K562 (cell line): ENCODE measurements at regions of chr1 and their contacts with region 1.

Region 1: GRCh38 chr1:246753670-246754535 is 29.7 kb downstream of the SCCPDH start:
- DNase-seq: peak; percentile 67 to 81 (median 70)
- ATAC-seq: peak; percentile 99
- H3K4me3 ChIP-seq: no peak overlapping the region
- H3K27ac ChIP-seq: no peak overlapping the region
- H3K4me1 ChIP-seq: 0 out of 5 replicates have a peak, but pooled peaks cover 0 to under 1% of the 10 kb centered on the region in 2 experiments
- H3K27me3 ChIP-seq: no peaks in the 10 kb centered on the region
- CTCF ChIP-seq: peak; percentile 82 to 94 (median 90)
- EP300 ChIP-seq: no peak
- POLR2A ChIP-seq: no peak
- RAD21 ChIP-seq: peak; percentile 75 to 87

Region 2: GRCh38 chr1:246497331-246497915 is 256.5 kb before region 1 on chr1:
- CTCF ChIA-PET with region 1: interaction called, 13 read pairs
- POLR2A ChIA-PET with region 1: no interaction called
- in situ Hi-C with region 1: no loop called
- intact Hi-C with region 1: loop called (anchors 1 kb)
- DNase-seq: peak; percentile 62 to 84 (median 67)
- ATAC-seq: peak; percentile 45
- H3K4me3 ChIP-seq: no peak overlapping the region
- H3K27ac ChIP-seq: no peak overlapping the region
- H3K4me1 ChIP-seq: peaks cover 0 to 2% of the 10 kb centered on the region in 2 experiments; a peak in 2 of 5 replicates
- H3K27me3 ChIP-seq: no peaks in the 10 kb centered on the region
- CTCF ChIP-seq: peak; percentile 70 to 91 (median 71); a peak in 5 of 6 replicates
- EP300 ChIP-seq: no peak; the same call in 1 of the 2 replicates
- POLR2A ChIP-seq: no peak
- RAD21 ChIP-seq: peak; percentile 84 to 92

Region 3: GRCh38 chr1:246608616-246609376 is 145.1 kb before region 1 on chr1:
- CTCF ChIA-PET with region 1: no interaction called
- POLR2A ChIA-PET with region 1: no interaction called
- in situ Hi-C with region 1: no loop called
- intact Hi-C with region 1: no loop called
- DNase-seq: no peak
- ATAC-seq: peak; percentile 71
- H3K4me3 ChIP-seq: no peak overlapping the region
- H3K27ac ChIP-seq: no peak overlapping the region
- H3K4me1 ChIP-seq: peaks cover 0 to 3% of the 10 kb centered on the region in 2 experiments; a peak in 1 of 5 replicates
- H3K27me3 ChIP-seq: no peaks in the 10 kb centered on the region
- CTCF ChIP-seq: no peak; a peak in 1 of 6 replicates
- EP300 ChIP-seq: no peak
- POLR2A ChIP-seq: no peak
- RAD21 ChIP-seq: 0 out of 4 replicates have a peak, but pooled peaks of 1 of the 2 experiments have one; percentile 8

Region 4: DNA sequence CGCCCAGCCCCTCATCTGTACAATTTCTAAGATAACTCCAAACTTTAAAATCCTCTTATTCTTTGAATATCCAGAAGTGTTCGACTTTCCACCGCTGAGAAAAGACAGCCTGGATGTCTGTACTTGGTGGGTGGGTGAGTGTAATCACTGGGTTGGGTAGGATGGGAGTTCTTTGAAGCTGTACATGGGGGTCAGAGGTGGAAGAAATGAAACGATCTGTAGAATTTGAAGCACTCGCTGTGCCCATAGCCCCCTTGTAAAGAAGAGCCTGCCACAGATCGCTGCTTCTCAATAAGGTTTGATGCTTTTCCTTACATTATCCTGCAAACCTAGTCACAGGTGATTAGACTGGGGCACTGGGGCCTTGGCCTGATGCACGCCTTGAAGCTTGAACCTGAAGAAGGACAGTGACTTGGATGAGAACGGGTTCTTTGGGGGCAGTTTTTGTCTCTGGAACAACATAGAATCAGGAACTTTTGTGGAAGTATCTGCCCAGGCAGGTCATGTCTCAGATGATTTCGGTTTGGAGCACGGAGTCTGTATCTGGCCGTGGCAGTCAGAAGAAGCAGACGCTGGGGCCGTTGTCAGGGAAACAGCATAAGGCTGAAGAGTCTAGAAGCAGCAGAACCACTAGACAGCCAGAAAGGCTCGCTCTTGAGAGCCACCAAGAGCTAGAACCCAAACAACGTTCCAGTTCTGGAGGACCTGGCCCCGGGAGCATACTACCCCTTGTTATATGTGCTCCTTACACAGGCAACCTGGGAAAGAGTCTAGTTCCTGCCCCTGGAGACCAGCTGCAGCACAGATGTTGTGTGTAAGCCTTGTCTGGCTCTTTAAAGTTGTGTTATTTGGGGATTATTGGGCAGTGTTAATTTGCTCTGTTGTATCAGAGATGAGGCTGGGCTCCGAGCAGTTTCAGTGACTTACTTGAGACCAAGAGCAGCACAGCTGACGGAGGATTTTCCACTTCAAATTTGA is 74.8 kb before region 1 on chr1:
- CTCF ChIA-PET with region 1: no interaction called
- POLR2A ChIA-PET with region 1: no interaction called
- in situ Hi-C with region 1: no loop called
- intact Hi-C with region 1: no loop called
- DNase-seq: no peak
- ATAC-seq: peak; percentile 25
- H3K4me3 ChIP-seq: no peak overlapping the region
- H3K27ac ChIP-seq: no peak overlapping the region
- H3K4me1 ChIP-seq: no peaks in the 10 kb centered on the region
- H3K27me3 ChIP-seq: no peaks in the 10 kb centered on the region
- CTCF ChIP-seq: no peak
- EP300 ChIP-seq: no peak
- POLR2A ChIP-seq: no peak
- RAD21 ChIP-seq: no peak

Region 5: GRCh38 chr1:246689409-246690008 is 64.4 kb before region 1 on chr1:
- CTCF ChIA-PET with region 1: interaction called, 11 read pairs
- POLR2A ChIA-PET with region 1: no interaction called
- in situ Hi-C with region 1: no loop called
- intact Hi-C with region 1: loop called (anchors 1 kb)
- DNase-seq: peak; percentile 72 to 85 (median 77)
- ATAC-seq: peak; percentile 96
- H3K4me3 ChIP-seq: no peak overlapping the region
- H3K27ac ChIP-seq: no peak overlapping the region
- H3K4me1 ChIP-seq: peaks cover 0 to 7% of the 10 kb centered on the region in 2 experiments; a peak in 3 of 5 replicates
- H3K27me3 ChIP-seq: no peaks in the 10 kb centered on the region; a peak in 1 of 5 replicates
- CTCF ChIP-seq: peak; percentile 84 to 96 (median 93)
- EP300 ChIP-seq: no peak
- POLR2A ChIP-seq: no peak
- RAD21 ChIP-seq: peak; percentile 67 to 80

Region 6: GRCh38 chr1:246773213-246773641 is 19.3 kb after region 1 on chr1:
- CTCF ChIA-PET with region 1: no interaction called
- POLR2A ChIA-PET with region 1: no interaction called
- in situ Hi-C with region 1: no loop called
- intact Hi-C with region 1: no loop called
- DNase-seq: no peak
- ATAC-seq: no peak
- H3K4me3 ChIP-seq: no peak overlapping the region
- H3K27ac ChIP-seq: no peak overlapping the region
- H3K4me1 ChIP-seq: no peaks in the 10 kb centered on the region
- H3K27me3 ChIP-seq: no peaks in the 10 kb centered on the region
- CTCF ChIP-seq: no peak
- EP300 ChIP-seq: no peak
- POLR2A ChIP-seq: no peak
- RAD21 ChIP-seq: no peak